ENCODE measurements at regions of chr15 and their contacts with region 1.

Region 1: GRCh38 chr15:78437762-78438302 is at the start of gene IREB2:
- DNase-seq: peak; percentile 93 to 99 (median 96)
- ATAC-seq: peak; percentile 91
- H3K4me3 ChIP-seq: peak within 1 kb of the TSS; percentile 61
- H3K4me3 Mint-ChIP-seq: peak within 1 kb of the TSS; percentile 94
- H3K27ac ChIP-seq: peak within 1 kb of the TSS; percentile 86 to 89
- H3K27ac Mint-ChIP-seq: peak within 1 kb of the TSS; percentile 97
- H3K4me1 ChIP-seq: peaks cover 34% of the 10 kb centered on the region
- H3K4me1 Mint-ChIP-seq: peaks cover 51% of the 10 kb centered on the region
- H3K27me3 ChIP-seq: no peaks in the 10 kb centered on the region
- H3K27me3 Mint-ChIP-seq: no peaks in the 10 kb centered on the region
- CTCF ChIP-seq: no peak
- total RNA-seq, gene IREB2: 84.3 to 89.0 TPM

Region 2: DNA sequence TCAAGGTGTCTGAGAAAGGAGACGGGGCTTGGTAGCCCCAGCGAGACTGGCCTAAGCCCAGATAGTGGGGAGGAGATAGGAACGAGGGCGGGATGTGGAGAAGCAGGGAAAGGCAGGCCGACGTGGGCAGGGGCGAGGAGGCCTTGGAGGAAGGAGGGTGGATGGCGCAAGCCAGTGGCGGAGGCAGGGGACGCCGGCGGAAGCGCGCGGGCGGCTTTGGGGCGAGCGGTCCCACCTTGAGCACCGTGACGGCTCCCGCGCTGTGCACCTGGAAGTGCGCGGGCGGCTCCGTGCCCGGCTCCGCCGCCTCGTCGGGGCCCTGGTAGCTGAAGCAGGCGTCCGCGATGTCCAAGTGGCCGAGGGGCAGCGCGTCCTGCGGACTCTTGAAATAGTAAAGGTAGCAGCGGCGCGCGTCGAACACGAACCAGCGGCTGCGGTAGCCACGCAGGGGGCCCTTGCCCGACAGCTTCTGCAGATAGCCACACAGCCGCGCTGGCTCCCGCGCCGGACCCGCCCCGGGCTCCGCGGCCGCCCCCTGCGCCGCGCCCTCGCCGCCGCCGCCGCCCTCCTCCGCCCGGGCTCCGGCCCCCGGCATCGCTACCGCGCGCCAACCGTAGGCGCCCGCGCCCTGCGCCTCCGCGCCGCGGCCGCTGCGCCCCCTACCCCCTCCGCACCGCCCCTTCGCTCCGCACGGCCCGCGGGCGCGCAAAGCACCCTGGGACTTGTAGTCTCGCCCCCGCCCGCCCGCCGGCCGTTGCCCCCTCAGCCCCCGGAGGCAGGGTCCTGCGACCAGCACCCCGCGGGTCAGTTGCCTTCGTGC is 360.6 kb before region 1 on chr15 and contains the start of gene TBC1D2B:
- CTCF ChIA-PET with region 1: no interaction called
- POLR2A ChIA-PET with region 1: no interaction called
- intact Hi-C with region 1: loop called in 1 of 2 experiments (anchors 2 kb)
- DNase-seq: peak; percentile 46 to 88 (median 66)
- ATAC-seq: peak; percentile 73
- H3K4me3 ChIP-seq: peak within 1 kb of the TSS; percentile 96
- H3K4me3 Mint-ChIP-seq: peak within 1 kb of the TSS; percentile 99
- H3K27ac ChIP-seq: peak within 1 kb of the TSS; percentile 68 to 75
- H3K27ac Mint-ChIP-seq: no peak within 1 kb of the TSS
- H3K4me1 ChIP-seq: peaks cover 48% of the 10 kb centered on the region
- H3K4me1 Mint-ChIP-seq: peaks cover 47% of the 10 kb centered on the region
- H3K27me3 ChIP-seq: no peaks in the 10 kb centered on the region
- H3K27me3 Mint-ChIP-seq: no peaks in the 10 kb centered on the region
- CTCF ChIP-seq: no peak
- total RNA-seq, gene TBC1D2B: 89.3 to 97.6 TPM

Region 3: GRCh38 chr15:78299101-78299930 is 138.5 kb before region 1 on chr15 and contains the start of gene SKIC8:
- CTCF ChIA-PET with region 1: interaction called, 3 read pairs
- POLR2A ChIA-PET with region 1: interaction called, 51 read pairs
- intact Hi-C with region 1: loop called (anchors 2 kb)
- DNase-seq: peak; percentile 79 to 96 (median 87)
- ATAC-seq: peak; percentile 96
- H3K4me3 ChIP-seq: peak within 1 kb of the TSS; percentile 99
- H3K4me3 Mint-ChIP-seq: peak within 1 kb of the TSS; percentile 96
- H3K27ac ChIP-seq: peak within 1 kb of the TSS; percentile 50 to 77
- H3K27ac Mint-ChIP-seq: peak within 1 kb of the TSS; percentile 88
- H3K4me1 ChIP-seq: peaks cover 18% of the 10 kb centered on the region
- H3K4me1 Mint-ChIP-seq: peaks cover 30% of the 10 kb centered on the region
- H3K27me3 ChIP-seq: no peaks in the 10 kb centered on the region
- H3K27me3 Mint-ChIP-seq: no peaks in the 10 kb centered on the region
- CTCF ChIP-seq: no peak
- total RNA-seq, gene SKIC8: 13.3 to 16.7 TPM

Region 4: DNA sequence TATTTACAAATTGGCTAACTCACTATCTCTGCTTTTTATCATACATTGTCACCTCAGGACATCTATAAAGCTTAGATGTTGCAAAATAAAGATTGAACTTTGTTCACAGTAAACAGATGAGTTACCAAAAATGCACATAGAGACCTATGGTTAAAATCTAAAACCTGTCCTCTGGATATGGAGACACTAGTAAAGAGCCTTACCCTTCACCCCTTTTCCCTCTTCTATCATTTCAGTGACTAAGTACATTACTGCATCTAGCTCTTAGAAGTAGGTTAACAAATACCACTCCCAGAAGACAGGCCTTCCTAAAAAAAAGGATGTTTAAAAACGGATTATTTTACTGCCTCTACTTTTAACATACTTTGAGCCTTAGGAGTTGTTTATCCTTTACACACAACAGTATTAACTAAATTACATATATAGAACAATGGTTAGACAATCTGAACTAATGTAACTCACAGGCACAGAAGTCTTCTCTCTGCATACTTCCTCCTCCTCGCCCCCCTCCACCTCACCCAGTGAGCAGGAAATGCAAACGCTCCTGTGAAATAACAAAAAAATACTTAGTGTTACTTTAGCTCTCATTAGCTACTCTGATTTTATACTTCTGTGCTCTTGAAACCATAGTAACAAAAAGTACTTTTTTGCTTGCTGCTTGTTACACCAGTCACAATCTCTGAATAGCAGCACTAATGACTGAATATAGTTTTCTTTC is 23.5 kb after region 1 on chr15:
- CTCF ChIA-PET with region 1: no interaction called
- POLR2A ChIA-PET with region 1: interaction called, 22 read pairs
- intact Hi-C with region 1: no loop called
- DNase-seq: peak in 7 of 14 experiments; percentile 3 to 61 (median 34)
- ATAC-seq: peak; percentile 89
- H3K4me3 ChIP-seq: no peak overlapping the region
- H3K4me3 Mint-ChIP-seq: peak overlapping the region; percentile 37
- H3K27ac ChIP-seq: no peak overlapping the region
- H3K27ac Mint-ChIP-seq: peak overlapping the region; percentile 79
- H3K4me1 ChIP-seq: peaks cover 3% of the 10 kb centered on the region
- H3K4me1 Mint-ChIP-seq: peaks cover 63% of the 10 kb centered on the region
- H3K27me3 ChIP-seq: no peaks in the 10 kb centered on the region
- H3K27me3 Mint-ChIP-seq: no peaks in the 10 kb centered on the region
- CTCF ChIP-seq: no peak

Region 5: GRCh38 chr15:78750566-78750965 is 312.7 kb after region 1 on chr15:
- CTCF ChIA-PET with region 1: no interaction called
- POLR2A ChIA-PET with region 1: interaction called, 5 read pairs
- intact Hi-C with region 1: loop called in 1 of 2 experiments (anchors 5 kb)
- DNase-seq: no peak
- ATAC-seq: no peak
- H3K4me3 ChIP-seq: no peak overlapping the region
- H3K4me3 Mint-ChIP-seq: peak overlapping the region; percentile 7
- H3K27ac ChIP-seq: no peak overlapping the region
- H3K27ac Mint-ChIP-seq: no peak overlapping the region
- H3K4me1 ChIP-seq: peaks cover 10% of the 10 kb centered on the region
- H3K4me1 Mint-ChIP-seq: peaks cover 9% of the 10 kb centered on the region
- H3K27me3 ChIP-seq: no peaks in the 10 kb centered on the region
- H3K27me3 Mint-ChIP-seq: no peaks in the 10 kb centered on the region
- CTCF ChIP-seq: no peak

Region 6: DNA sequence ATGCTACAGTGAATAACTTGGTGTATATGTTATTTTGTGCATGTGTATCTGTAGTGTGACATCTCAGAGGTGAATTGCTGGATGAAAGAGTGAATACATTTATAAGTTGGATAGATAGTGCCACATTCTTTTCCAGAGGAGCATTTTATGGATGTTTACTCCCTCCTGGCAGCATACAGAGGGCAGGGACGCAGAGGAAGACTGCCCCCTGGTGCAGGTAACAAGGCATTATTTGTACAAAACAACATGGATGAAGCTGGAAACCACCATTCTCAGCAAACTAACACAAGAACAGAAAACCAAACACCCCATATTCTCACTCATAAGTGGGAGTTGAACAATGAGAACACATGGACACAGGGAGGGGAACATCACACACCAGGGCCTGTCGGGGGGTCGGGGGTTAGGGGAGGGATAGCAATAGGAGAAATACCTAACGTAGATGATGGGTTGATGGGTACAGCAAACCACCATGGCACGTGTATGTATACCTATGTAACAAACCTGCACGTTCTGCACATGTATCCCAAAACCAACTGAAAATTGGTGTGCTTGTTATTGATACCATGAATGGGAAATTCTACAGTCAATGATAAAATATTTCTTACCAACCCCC is 1872.0 kb after region 1 on chr15:
- CTCF ChIA-PET with region 1: no interaction called
- POLR2A ChIA-PET with region 1: no interaction called
- intact Hi-C with region 1: no loop called
- DNase-seq: no peak
- ATAC-seq: no peak
- H3K4me3 ChIP-seq: no peak overlapping the region
- H3K4me3 Mint-ChIP-seq: no peak overlapping the region
- H3K27ac ChIP-seq: no peak overlapping the region
- H3K27ac Mint-ChIP-seq: no peak overlapping the region
- H3K4me1 ChIP-seq: no peaks in the 10 kb centered on the region
- H3K4me1 Mint-ChIP-seq: no peaks in the 10 kb centered on the region
- H3K27me3 ChIP-seq: peaks cover 0 to 3% of the 10 kb centered on the region in 2 experiments
- H3K27me3 Mint-ChIP-seq: peaks cover 42% of the 10 kb centered on the region
- CTCF ChIP-seq: no peak